H1 (cell line): ENCODE measurements at regions of chr2 and their contacts with region 1.

Region 1: GRCh38 chr2:74458132-74458925 is at the start of gene WBP1:
- DNase-seq: peak; percentile 98 to 100
- H3K4me3 ChIP-seq: peak within 1 kb of the TSS; percentile 83 to 99 (median 98)
- H3K27ac ChIP-seq: peak within 1 kb of the TSS; percentile 95
- H3K4me1 ChIP-seq: peaks cover 0 to 10% (median 2%) of the 10 kb centered on the region in 4 experiments; a peak in 5 of 7 replicates
- H3K27me3 ChIP-seq: no peaks in the 10 kb centered on the region
- CTCF ChIP-seq: no peak
- EP300 ChIP-seq: no peak
- POLR2A ChIP-seq: peak in 1 of 2 experiments; percentile 83; a peak in 2 of 3 replicates
- RAD21 ChIP-seq: no peak
- total RNA-seq, gene WBP1: 51.4 and 57.2 TPM in 2 replicates

Region 2: DNA sequence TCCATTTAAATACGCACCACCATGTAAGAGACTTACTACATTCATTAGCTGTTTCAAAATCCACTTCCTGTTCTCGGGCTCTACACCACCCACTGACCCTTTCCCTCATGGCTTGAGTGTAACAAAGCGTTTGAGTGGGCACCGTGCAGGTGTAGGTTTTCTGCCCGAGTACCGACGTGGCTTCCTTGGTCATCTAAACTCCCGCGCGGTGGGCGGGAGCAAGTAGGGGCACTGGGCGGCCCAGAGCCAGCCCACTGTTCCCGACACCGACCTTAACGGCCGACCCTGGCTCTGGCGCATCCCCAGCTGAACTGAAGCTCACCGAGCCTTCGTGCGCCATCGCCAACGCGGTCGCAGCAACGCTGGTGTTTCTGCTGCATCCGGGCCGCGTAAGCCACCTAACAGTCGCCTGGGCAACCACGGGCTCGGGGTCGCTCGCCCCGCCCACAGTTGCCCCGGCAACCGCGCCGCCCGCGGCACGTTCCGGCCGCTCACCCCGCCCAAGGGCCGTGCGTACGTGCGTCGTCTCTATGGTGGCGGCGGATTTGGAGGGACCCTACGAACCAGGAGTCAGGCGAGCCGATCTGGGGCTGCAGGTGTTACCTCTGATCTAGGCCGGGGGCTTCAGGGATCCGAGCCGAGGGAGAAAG is 37.0 kb before region 1 on chr2 and contains the starts of genes C2orf81 and WDR54:
- CTCF ChIA-PET with region 1: interaction called, 3 read pairs
- POLR2A ChIA-PET with region 1: interaction called, 23 read pairs
- DNase-seq: peak; percentile 84 to 96
- H3K4me3 ChIP-seq: peak within 1 kb of the TSS; percentile 51 to 92 (median 74)
- H3K27ac ChIP-seq: peak within 1 kb of the TSS; percentile 51; the same call in 1 of the 2 replicates
- H3K4me1 ChIP-seq: peaks cover 0 to 5% (median 3%) of the 10 kb centered on the region in 4 experiments; a peak in 3 of 7 replicates
- H3K27me3 ChIP-seq: 0 out of 7 replicates have a peak, but pooled peaks cover 0 to 2% (median 0%) of the 10 kb centered on the region in 4 experiments
- CTCF ChIP-seq: no peak
- EP300 ChIP-seq: no peak
- POLR2A ChIP-seq: peak in 1 of 2 experiments; percentile 92; a peak in 2 of 3 replicates
- RAD21 ChIP-seq: no peak
- total RNA-seq, gene C2orf81: 3.3 and 3.8 TPM in 2 replicates
- total RNA-seq, gene WDR54: 41.6 and 45.0 TPM in 2 replicates

Region 3: GRCh38 chr2:74440378-74441169 is 17.8 kb before region 1 on chr2:
- CTCF ChIA-PET with region 1: interaction called, 16 read pairs
- POLR2A ChIA-PET with region 1: interaction called, 66 read pairs
- DNase-seq: peak in 1 of 2 experiments; percentile 92
- H3K4me3 ChIP-seq: peak overlapping the region; percentile 69 to 90 (median 80)
- H3K27ac ChIP-seq: peak overlapping the region; percentile 87
- H3K4me1 ChIP-seq: peaks cover 4 to 24% (median 17%) of the 10 kb centered on the region in 4 experiments; a peak in 6 of 7 replicates
- H3K27me3 ChIP-seq: no peaks in the 10 kb centered on the region; a peak in 2 of 7 replicates
- CTCF ChIP-seq: peak in 2 of 3 experiments; percentile 12 to 18; a peak in 2 of 4 replicates
- EP300 ChIP-seq: no peak
- POLR2A ChIP-seq: peak in 1 of 2 experiments; percentile 50; a peak in 1 of 3 replicates
- RAD21 ChIP-seq: no peak

Region 4: GRCh38 chr2:74472086-74472944 is 14.0 kb after region 1 on chr2 and contains the start of gene MRPL53:
- CTCF ChIA-PET with region 1: interaction called, 86 read pairs
- POLR2A ChIA-PET with region 1: interaction called, 89 read pairs
- DNase-seq: peak; percentile 84 to 94
- H3K4me3 ChIP-seq: peak within 1 kb of the TSS; percentile 77 to 95 (median 87)
- H3K27ac ChIP-seq: peak within 1 kb of the TSS; percentile 79
- H3K4me1 ChIP-seq: peaks cover 0 to 3% (median 2%) of the 10 kb centered on the region in 4 experiments; a peak in 3 of 7 replicates
- H3K27me3 ChIP-seq: no peaks in the 10 kb centered on the region
- CTCF ChIP-seq: no peak
- EP300 ChIP-seq: 0 out of 3 replicates have a peak, but pooled peaks of 1 of the 2 experiments have one; percentile 46
- POLR2A ChIP-seq: peak; percentile 80 to 95
- RAD21 ChIP-seq: no peak
- total RNA-seq, gene MRPL53: 46.3 and 50.2 TPM in 2 replicates

Region 5: DNA sequence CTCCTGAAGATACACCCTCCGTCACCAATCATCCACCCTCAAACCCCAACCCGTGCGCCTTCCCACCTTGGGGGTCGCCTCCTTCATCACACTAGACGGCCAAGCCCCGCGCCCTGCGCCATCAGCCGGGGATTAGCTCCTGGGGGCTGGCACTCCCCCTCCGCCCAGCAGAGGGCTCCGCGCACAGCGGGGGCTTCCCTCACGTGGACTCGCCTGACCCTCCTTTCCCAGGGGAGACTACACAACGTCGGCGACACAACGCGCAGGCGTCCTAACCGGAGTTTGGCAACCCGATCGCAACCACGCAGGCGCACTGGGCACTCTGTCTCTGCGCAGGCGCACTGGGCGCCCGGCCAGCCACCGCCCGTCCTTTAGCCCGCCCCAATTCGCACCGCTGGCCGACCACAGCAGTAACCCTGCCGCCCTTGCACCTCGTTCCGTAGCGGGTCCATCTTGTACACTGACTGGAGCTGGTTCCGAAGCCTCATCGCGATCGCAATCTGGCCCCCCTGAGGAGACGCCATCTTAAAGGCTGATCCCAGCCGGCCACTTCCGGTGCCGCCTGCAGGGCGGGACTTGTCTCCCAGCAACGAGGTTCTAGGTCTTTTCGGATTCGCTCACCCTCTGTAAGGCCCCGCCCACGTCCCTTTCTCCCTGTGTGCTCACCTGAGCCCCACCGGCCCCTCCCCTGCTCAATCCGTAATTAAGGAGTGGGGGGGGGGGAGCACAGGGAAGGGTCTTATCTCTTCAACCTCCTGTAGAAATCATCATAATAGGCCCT is 49.0 kb after region 1 on chr2 and contains the start of gene PCGF1:
- CTCF ChIA-PET with region 1: interaction called, 4 read pairs
- POLR2A ChIA-PET with region 1: interaction called, 14 read pairs
- DNase-seq: peak; percentile 96 to 98
- H3K4me3 ChIP-seq: peak within 1 kb of the TSS; percentile 61 to 98 (median 92)
- H3K27ac ChIP-seq: peak within 1 kb of the TSS; percentile 99
- H3K4me1 ChIP-seq: peaks cover 3 to 25% (median 20%) of the 10 kb centered on the region in 4 experiments
- H3K27me3 ChIP-seq: peaks cover 48 to 80% (median 76%) of the 10 kb centered on the region in 4 experiments
- CTCF ChIP-seq: peak in 2 of 3 experiments; percentile 48 to 63; a peak in 3 of 4 replicates
- EP300 ChIP-seq: no peak
- POLR2A ChIP-seq: peak in 1 of 2 experiments; percentile 84; a peak in 2 of 3 replicates
- RAD21 ChIP-seq: peak; percentile 9 to 28; a peak in 1 of 4 replicates
- total RNA-seq, gene PCGF1: 10.0 and 13.8 TPM in 2 replicates